ENCODE measurements at regions of chr11 and their contacts with region 1.

Region 1: DNA sequence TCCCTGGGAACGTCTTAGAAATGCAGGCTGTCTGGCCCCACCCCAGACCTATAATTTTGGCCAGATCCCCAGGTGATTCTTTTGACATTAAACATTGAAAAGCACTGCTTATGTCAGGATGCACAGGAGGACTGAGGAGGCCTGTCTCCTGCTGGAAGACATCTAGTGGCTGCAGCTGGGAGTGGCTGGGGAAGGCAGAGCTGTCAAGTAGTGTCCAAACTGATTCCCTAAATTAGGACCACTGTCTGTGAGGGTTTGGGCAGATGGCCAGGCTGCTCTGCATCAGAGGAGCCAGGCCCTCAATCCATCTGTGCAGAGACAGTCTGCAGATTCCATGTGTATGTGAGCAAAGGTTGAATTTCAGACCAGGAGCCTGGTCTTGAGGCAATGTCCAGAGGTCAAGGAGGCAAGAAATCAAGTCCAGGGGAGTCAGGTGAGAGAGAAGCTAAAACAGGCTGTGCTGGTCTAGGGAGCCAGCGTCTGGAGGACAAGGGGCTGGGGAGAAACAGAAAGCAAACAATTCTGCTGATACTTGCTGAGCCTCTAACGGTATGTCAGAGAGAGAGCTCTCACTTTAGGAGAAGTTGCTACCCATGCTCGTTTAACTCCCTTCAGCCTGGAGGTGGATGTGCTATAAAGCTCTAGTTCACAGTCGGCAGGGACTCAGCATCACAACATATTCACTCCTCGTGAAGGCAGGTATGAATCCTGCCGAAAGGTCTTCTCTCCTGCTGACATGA is 15.3 kb upstream of the SYTL2 start:
- DNase-seq: peak; percentile 79
- H3K4me3 Mint-ChIP-seq: peak overlapping the region; percentile 66
- H3K27ac Mint-ChIP-seq: peak overlapping the region; percentile 67
- H3K4me1 Mint-ChIP-seq: peaks cover 66% of the 10 kb centered on the region
- H3K27me3 Mint-ChIP-seq: no peaks in the 10 kb centered on the region

Region 2: DNA sequence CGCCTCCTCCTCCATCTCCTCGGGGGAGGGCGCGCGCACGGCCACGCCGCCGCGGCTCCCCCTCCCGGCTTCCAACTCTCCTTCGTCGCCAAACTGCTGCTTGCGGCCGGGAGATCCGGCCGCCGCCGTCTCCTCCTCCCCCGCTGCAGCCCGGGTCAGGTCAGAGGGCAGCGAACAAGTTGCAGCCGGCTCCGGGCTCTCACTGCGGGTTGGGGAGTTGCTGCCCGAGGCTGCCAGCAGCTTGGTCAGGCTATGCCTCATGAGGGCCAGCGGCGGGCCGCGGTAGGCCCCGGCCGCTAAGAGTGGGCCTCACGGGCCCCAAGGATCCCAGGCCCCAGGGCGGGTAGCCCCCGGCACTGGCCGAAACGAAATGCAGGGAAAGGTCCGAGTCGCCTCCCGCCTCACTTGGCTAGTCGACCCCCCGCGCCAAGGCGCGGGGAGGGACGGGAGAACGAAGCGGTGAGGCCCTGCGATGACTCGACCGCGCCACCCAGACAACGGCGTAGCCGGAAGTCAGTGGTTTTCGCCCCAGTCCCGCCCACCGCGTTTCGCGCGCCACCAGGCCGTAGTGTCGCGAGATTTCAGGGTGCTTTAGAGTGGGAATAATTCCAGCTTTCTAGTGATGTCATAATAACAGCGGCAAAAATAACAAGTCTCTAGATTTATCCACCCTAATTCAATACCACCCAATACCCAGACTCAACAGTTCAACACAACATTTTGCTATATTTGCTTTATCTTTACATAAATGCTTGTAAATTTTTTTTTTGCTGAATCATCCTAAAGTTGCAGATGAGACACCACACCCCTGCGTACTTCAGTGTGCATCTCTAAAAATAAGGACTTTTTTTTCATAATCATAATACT is 161.4 kb before region 1 on chr11 and contains the start of gene CREBZF:
- intact Hi-C with region 1: loop called (anchors 1 kb)
- DNase-seq: peak; percentile 98
- H3K4me3 Mint-ChIP-seq: peak within 1 kb of the TSS; percentile 97
- H3K27ac Mint-ChIP-seq: peak within 1 kb of the TSS; percentile 99
- H3K4me1 Mint-ChIP-seq: peaks cover 29% of the 10 kb centered on the region
- H3K27me3 Mint-ChIP-seq: peaks cover 2% of the 10 kb centered on the region
- total RNA-seq, gene CREBZF: 50.9 and 54.5 TPM in 2 replicates

Region 3: DNA sequence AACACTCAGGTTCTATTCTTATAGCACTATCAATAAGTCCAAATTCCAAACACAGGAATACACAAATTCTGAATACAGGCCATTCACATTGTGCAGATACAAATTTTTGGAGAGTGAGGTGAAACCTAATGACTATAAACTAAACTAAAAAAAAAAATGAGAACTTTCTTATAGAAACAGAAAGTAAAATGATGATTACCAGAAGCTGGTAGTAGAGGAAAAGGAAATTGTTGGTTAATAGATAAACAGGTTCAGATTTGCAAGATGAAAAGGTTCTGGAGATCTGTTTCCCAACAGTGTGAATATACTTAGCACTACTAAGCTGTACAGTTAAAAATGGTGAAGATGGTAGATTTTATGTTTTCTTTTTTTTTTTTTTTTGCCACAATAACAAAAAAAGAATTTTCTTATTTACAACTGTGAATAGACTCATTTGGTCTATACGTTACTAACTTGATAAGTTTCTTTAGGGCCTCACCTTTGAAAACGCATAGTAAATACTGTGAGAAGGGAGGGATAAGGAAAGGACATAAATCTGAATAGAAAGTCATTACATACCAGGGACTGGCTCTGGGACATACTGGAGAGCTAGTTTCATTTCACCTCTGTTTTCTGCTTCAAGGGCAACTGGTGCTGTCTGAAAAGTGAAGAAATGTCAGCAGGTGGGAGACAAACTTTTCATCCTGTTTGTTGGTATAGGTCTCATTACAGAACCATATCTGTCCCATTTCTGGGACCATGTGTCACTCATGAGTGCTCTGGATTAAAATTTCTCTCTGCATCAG is 126.1 kb before region 1 on chr11:
- intact Hi-C with region 1: loop called (anchors 2 kb)
- DNase-seq: peak; percentile 58
- H3K4me3 Mint-ChIP-seq: peak overlapping the region; percentile 36
- H3K27ac Mint-ChIP-seq: peak overlapping the region; percentile 80
- H3K4me1 Mint-ChIP-seq: peaks cover 32% of the 10 kb centered on the region
- H3K27me3 Mint-ChIP-seq: no peaks in the 10 kb centered on the region

Region 4: DNA sequence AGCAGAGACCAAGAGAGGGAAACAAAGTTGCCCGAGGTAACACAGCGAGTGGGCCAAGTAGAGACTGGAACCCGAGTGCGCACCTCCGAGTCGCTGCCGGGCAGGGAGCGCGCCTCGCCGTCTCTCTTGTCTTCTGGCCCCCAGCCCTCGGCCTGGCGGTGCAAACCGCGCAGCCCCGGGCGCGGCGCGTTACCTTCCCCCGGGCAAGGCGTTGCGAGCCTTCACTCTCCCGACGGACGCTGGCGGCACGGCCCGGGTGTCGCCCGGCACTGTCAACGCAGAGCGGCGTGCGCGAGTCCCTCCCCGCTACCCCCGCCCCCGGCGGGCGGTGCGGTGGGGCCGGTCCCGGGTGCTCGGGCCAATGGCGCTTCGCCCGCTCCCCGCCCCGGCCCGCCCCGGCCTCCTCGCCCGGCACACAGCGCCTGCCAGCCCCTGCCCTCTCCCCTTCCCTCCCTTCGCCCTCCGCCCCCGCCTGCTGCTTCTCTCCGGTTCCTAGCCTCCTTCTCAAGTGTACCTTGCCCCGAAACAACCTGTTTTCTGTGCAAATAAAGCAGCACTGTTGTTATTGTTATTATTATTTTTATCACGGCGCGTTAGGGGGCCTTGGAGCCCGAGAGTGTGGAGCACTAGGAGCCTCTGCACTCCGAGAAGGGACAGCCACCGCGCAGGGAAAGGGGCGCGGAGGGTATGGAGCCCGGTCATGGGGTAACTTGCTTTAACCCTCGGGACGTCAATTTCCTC is 15.2 kb before region 1 on chr11 and contains the start of gene SYTL2:
- intact Hi-C with region 1: loop called (anchors 1 kb)
- DNase-seq: peak; percentile 95
- H3K4me3 Mint-ChIP-seq: peak within 1 kb of the TSS; percentile 90
- H3K27ac Mint-ChIP-seq: peak within 1 kb of the TSS; percentile 78
- H3K4me1 Mint-ChIP-seq: peaks cover 39% of the 10 kb centered on the region
- H3K27me3 Mint-ChIP-seq: peaks cover 11% of the 10 kb centered on the region
- total RNA-seq, gene SYTL2: 13.9 and 14.3 TPM in 2 replicates